Activated CD8-positive, alpha-beta memory T cell treated with anti-CD3 and anti-CD28 coated beads, Interleukin-2, amount 10 ng/mL, durations not matched to agents 7 days and 5 days (primary cell): ENCODE measurements at regions of chr5 and their contacts with region 1.

Region 1: GRCh38 chr5:80191991-80192398 is 63.9 kb downstream of the SERINC5 start:
- DNase-seq: peak; percentile 82
- ATAC-seq: peak; percentile 76
- H3K4me3 Mint-ChIP-seq: peak overlapping the region; percentile 67
- H3K27ac Mint-ChIP-seq: peak overlapping the region; percentile 96
- H3K4me1 Mint-ChIP-seq: peaks cover 80% of the 10 kb centered on the region
- H3K27me3 Mint-ChIP-seq: no peaks in the 10 kb centered on the region

Region 2: GRCh38 chr5:80204808-80205614 is 13.0 kb after region 1 on chr5:
- CTCF ChIA-PET with region 1: interaction called, 17 read pairs
- DNase-seq: no peak
- ATAC-seq: no peak
- H3K4me3 Mint-ChIP-seq: no peak overlapping the region
- H3K27ac Mint-ChIP-seq: peak overlapping the region; percentile 17
- H3K4me1 Mint-ChIP-seq: peaks cover 34% of the 10 kb centered on the region
- H3K27me3 Mint-ChIP-seq: no peaks in the 10 kb centered on the region

Region 3: DNA sequence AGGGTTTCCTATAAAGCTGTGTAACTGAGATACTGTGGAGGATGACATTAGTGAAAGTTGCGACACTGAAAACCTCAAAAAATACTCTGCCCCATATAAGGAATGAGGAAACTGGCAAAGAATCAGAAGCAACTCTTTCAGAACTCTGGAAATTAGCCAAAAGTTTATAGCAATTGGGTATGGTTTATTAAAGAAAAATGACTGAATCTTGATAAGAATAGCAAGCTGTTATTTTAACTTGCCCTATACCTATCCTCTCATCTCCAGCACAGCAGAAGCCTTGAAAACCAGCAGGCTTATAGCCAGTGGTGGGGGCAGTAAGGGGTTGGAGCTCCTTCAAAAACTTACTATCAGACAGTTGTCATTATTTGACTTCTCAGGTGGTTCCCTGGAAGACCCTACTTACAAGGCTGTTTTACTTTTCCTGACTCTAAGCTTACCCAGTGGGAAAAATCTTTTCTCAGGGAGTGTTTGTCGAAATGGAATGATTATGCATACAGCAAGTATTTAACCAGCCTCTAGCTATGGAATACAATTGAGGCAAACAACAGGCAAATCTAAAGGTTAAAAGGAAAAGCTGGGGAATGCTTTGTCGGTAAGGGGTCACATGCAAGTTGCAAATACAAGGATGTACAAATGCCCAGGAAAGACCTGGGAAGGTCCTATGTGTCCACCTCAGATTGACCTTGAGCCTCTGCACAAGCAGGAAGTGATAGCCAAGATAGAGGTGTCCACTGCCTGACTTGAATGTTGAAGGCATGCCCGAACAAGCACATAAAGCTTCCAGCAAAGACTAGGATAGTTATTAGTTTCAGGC is 274.9 kb after region 1 on chr5:
- CTCF ChIA-PET with region 1: no interaction called
- DNase-seq: no peak
- ATAC-seq: no peak
- H3K4me3 Mint-ChIP-seq: no peak overlapping the region
- H3K27ac Mint-ChIP-seq: no peak overlapping the region
- H3K4me1 Mint-ChIP-seq: no peaks in the 10 kb centered on the region
- H3K27me3 Mint-ChIP-seq: no peaks in the 10 kb centered on the region